ENCODE measurements at regions of chrX and their contacts with region 1.

Region 1: DNA sequence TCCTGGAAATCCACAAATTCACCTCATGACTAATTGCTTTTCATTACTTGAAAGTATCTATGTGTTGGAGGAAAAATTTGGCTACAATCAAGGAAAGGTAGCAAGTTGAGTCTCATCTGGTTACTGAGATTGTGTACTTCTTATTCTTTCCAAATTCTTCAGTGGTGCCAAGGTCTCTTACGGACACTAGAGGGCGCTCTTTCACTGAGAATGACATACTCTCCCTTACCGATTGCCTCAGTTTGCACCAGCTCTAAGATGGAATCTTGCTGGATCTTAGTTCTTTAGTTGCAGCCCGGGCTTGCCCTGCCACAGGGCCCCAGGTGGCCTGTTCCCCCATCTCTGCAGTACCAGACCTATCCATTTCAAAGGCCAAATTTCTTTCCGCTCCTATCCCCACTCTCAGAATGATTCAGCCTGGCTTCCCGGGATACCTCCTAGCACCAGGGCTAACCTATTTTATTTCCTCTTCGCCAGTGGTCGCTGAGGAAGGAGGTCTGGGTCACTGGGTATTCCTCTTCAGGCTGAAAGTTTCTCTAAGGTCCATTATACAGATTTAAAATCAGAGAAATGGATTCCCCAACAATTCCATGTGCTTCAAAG is 24.6 kb upstream of the GPR50 start:
- DNase-seq: peak; percentile 2 to 9
- H3K4me3 ChIP-seq: no peak overlapping the region
- H3K27ac ChIP-seq: no peak overlapping the region
- H3K4me1 ChIP-seq: no peaks in the 10 kb centered on the region
- H3K27me3 ChIP-seq: peaks cover 7% of the 10 kb centered on the region
- CTCF ChIP-seq: peak; percentile 39 to 57 (median 53)
- POLR2A ChIP-seq: no peak

Region 2: DNA sequence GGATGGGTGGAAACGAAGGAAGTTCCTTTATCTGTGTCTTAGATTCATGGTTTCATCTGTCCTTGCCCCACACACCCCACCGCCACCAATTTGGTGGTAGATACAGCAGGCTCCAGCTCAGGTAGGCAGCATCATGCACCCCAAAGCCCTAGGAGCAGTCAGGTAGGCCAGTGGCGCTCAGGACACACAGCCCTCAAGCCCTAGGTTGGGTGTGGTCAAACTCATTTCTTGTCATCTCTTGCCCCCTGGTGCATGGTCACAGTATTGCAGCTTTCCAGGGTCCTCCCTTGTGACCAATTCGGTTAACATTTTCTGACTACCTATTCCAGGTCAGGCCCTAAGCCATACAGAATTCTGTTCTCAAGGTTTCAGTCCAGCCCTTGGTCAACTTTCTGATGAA is 529.0 kb after region 1 on chrX:
- intact Hi-C with region 1: loop called (anchors 10 kb)
- DNase-seq: peak; percentile 44 to 58
- H3K4me3 ChIP-seq: no peak overlapping the region
- H3K27ac ChIP-seq: no peak overlapping the region
- H3K4me1 ChIP-seq: no peaks in the 10 kb centered on the region
- H3K27me3 ChIP-seq: no peaks in the 10 kb centered on the region
- CTCF ChIP-seq: peak in 4 of 6 experiments; percentile 43 to 53 (median 48)
- POLR2A ChIP-seq: no peak

Measured in thyroid gland (tissue), 4 donors.